ENCODE measurements at regions of chr10 and their contacts with region 1.

Region 1: DNA sequence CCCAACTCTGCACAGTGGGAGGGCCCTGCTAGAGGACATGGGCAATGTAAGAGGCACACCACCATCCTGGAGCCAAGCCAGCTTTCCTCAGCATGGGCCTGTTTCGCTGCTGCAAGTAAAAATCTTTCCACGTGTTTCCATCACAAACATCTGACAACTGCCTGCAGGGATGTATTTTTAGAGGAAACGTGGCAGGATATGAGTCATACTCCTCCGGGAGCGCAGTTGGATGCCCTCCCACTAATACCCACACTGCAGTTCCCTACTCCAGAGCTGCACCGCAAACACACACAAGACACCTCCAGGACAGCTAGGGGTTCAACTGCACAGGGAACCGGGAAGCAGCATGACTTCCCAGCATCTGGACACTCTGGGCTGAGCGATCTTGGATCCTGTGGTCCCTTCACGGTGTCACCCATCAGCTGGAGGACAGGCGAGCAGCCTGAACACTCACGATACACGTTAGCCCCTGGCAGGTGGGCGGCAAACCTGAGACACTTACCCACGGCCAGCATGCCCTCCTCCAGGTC is 26.1 kb downstream of the PLAC9 start:
- DNase-seq: no peak
- H3K4me3 ChIP-seq: no peak overlapping the region
- H3K27ac ChIP-seq: no peak overlapping the region
- H3K4me1 ChIP-seq: peaks cover 2 to 8% (median 6%) of the 10 kb centered on the region in 4 experiments; a peak in 5 of 7 replicates
- H3K27me3 ChIP-seq: no peaks in the 10 kb centered on the region
- CTCF ChIP-seq: no peak
- EP300 ChIP-seq: no peak
- POLR2A ChIP-seq: no peak
- RAD21 ChIP-seq: no peak

Region 2: GRCh38 chr10:80168679-80169380 is 10.2 kb after region 1 on chr10:
- CTCF ChIA-PET with region 1: interaction called, 66 read pairs
- POLR2A ChIA-PET with region 1: interaction called, 5 read pairs
- DNase-seq: peak in 1 of 2 experiments; percentile 77
- H3K4me3 ChIP-seq: no peak overlapping the region
- H3K27ac ChIP-seq: no peak overlapping the region
- H3K4me1 ChIP-seq: peaks cover 4 to 16% (median 9%) of the 10 kb centered on the region in 4 experiments
- H3K27me3 ChIP-seq: no peaks in the 10 kb centered on the region
- CTCF ChIP-seq: peak; percentile 60 to 65 (median 62)
- EP300 ChIP-seq: no peak
- POLR2A ChIP-seq: no peak
- RAD21 ChIP-seq: peak; percentile 63 to 72

Region 3: GRCh38 chr10:80177781-80178540 is 19.3 kb after region 1 on chr10:
- CTCF ChIA-PET with region 1: interaction called, 66 read pairs
- POLR2A ChIA-PET with region 1: interaction called, 5 read pairs
- DNase-seq: no peak
- H3K4me3 ChIP-seq: no peak overlapping the region
- H3K27ac ChIP-seq: no peak overlapping the region
- H3K4me1 ChIP-seq: peaks cover 0 to 5% (median 2%) of the 10 kb centered on the region in 4 experiments; a peak in 3 of 7 replicates
- H3K27me3 ChIP-seq: no peaks in the 10 kb centered on the region
- CTCF ChIP-seq: no peak
- EP300 ChIP-seq: no peak
- POLR2A ChIP-seq: no peak
- RAD21 ChIP-seq: no peak

Region 4: DNA sequence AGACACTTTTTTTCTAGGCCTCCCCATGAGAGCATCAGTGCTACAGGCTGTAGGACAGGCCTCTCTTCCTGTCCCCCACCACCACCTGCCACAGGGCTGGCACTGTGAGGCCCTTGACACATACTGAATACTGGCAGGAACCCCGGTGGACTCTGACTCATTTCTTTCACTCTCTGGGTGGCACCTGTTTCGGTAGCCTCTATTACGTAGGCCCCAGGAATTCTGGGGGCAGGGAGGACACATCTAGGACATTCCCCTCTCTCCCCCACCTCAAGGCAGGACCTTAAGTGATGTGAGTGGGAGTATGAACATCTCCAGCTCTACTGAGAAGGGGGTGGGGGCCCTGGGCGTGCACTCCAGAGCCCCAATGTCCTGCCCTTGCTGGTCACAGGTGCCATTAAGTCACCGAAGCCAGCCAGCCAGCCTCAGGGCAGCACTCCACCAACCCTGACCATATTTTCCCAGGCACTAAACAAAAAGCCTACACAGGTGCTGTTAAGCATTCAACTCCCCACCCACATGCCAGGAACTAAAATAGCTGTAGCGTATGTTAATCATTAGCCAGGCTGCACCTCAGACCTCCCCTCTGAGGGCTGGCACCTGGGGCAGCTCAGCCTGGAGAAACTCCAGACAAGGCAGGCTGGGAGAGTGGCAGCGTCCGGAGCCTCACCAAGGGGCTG is 37.7 kb after region 1 on chr10:
- CTCF ChIA-PET with region 1: interaction called, 27 read pairs
- POLR2A ChIA-PET with region 1: no interaction called
- DNase-seq: no peak
- H3K4me3 ChIP-seq: no peak overlapping the region
- H3K27ac ChIP-seq: no peak overlapping the region
- H3K4me1 ChIP-seq: peaks cover 0 to 12% (median 6%) of the 10 kb centered on the region in 4 experiments; a peak in 5 of 7 replicates
- H3K27me3 ChIP-seq: no peaks in the 10 kb centered on the region
- CTCF ChIP-seq: no peak
- EP300 ChIP-seq: no peak
- POLR2A ChIP-seq: no peak
- RAD21 ChIP-seq: no peak

Region 5: DNA sequence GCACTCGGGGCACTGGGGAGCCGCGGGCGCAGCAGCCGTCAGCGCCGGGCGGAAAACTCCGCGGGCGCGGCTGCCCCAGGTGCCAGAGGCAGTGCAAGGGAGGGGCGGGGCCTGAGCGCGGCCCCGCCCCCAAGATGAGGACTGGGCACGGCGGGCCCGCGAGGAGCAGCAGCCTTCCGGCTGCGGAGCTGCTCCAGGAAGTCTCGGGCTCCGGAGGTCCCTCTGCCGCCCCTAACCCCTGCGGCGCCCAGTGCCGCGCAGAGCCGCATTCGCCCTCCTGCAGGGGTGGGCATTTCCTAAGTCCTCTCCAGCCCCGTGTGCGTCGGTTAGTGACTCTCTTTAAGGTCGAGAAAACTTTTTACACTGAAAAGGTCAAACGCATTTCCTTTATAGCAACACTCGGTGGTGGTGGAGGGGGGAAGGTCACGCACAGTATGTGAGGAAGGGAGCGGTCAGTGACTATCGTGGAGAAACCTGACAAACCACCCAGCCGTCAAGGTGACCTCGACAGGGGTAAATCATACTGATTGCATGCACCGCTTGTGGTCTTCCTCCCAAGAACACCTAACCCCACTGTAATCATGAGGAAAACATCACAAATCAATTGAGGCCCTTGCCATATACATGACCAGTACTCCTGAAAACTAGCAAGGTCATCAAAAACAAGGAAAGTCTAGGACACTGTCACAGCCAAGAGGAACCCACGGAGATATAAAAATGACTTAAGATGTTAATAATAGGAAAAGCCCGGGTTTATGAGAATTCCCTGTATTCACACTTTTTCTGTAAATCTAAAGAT is 47.0 kb after region 1 on chr10 and contains the start of gene ANXA11:
- CTCF ChIA-PET with region 1: interaction called, 11 read pairs
- POLR2A ChIA-PET with region 1: interaction called, 3 read pairs
- DNase-seq: peak; percentile 62 to 87
- H3K4me3 ChIP-seq: peak within 1 kb of the TSS; percentile 65 to 81 (median 75)
- H3K27ac ChIP-seq: no peak within 1 kb of the TSS; the same call in 1 of the 2 replicates
- H3K4me1 ChIP-seq: peaks cover 10 to 17% (median 13%) of the 10 kb centered on the region in 4 experiments
- H3K27me3 ChIP-seq: peaks cover 0 to 17% (median 10%) of the 10 kb centered on the region in 4 experiments; a peak in 6 of 7 replicates
- CTCF ChIP-seq: no peak
- EP300 ChIP-seq: no peak
- POLR2A ChIP-seq: peak in 1 of 2 experiments; percentile 78; a peak in 2 of 3 replicates
- RAD21 ChIP-seq: no peak
- total RNA-seq, gene ANXA11: 70.6 and 84.9 TPM in 2 replicates